PC-9 (cell line): ENCODE measurements at regions of chr12 and their contacts with region 1.

Region 1: GRCh38 chr12:104243551-104243950 is 28.0 kb downstream of the TXNRD1 start:
- DNase-seq: no peak
- H3K4me3 ChIP-seq: no peak overlapping the region
- H3K27ac ChIP-seq: no peak overlapping the region
- H3K4me1 ChIP-seq: no peaks in the 10 kb centered on the region
- H3K27me3 ChIP-seq: no peaks in the 10 kb centered on the region
- CTCF ChIP-seq: no peak

Region 2: DNA sequence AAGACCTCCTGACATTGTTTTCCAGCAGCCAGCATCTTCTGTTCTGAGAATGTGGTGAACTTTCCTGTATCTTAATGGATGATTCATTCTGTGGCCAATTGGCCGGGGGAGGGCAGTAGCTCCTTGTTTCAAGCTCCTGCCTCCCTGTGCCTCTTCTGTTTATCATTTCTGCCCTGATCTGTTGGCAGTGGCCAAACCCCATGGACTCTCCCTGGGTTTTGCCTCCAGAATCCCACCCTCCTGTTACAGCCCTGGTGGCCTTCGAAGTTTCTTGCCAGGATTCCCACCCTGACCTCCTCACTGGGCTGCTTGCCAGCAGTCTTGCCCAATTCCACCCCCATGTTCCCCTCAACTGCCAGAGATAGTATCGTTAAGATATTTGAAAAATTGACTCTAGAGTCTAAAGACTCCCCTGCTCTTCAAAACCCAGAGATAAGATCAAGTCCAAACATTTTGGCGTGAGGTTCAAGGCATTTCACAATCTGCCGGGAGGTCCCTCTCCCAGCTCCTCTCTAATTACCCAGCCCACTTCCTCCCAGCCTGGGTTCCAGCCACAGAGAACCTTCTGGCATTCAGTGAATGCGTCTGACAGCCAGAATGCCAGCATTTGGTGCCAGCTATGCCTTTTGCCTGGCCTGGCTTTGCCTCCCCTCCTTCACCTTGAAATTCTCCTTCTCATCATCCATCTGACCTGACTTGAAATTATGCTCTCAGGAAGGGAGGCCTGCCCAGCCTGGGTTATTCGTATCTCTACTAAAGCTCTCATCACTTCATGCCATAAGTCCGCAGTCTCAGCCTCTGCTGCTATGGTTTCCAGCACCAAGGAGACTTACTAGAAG is 65.7 kb before region 1 on chr12:
- CTCF ChIA-PET with region 1: no interaction called
- POLR2A ChIA-PET with region 1: no interaction called
- intact Hi-C with region 1: no loop called
- DNase-seq: peak; percentile 73 to 88
- H3K4me3 ChIP-seq: peak overlapping the region; percentile 18; the same call in 1 of the 2 replicates
- H3K27ac ChIP-seq: peak overlapping the region; percentile 56
- H3K4me1 ChIP-seq: peaks cover 38% of the 10 kb centered on the region
- H3K27me3 ChIP-seq: no peaks in the 10 kb centered on the region
- CTCF ChIP-seq: peak; percentile 60; the same call in 1 of the 2 replicates

Region 3: DNA sequence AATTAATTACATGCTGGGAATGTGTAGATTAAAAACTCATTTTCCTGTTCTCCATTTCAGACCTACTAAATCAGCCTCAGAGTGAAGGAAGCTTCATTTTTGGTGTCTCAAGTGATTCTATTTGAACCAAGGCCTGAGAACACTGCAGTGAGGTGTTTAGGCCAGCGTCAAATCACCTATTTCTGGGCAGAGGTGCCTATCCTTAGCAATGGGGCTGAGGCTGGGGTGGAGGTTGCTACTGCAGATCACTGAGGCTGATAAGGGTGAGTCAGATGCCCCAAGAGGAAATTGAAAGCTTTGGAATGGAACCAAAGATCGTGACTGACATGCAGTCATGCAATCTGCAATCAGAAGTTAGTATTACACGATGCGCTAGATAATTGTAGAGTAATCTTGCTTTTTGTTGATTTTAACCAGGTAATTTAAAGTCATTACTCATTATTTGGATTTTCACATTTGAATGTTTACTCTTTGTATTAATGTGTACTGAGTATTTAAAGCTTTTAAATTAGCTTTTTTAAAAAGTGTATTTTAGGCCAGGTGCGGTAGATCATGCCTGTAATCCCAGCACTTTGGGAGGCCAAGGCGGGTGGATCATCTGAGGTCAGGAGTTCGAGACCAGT is 23.5 kb before region 1 on chr12:
- CTCF ChIA-PET with region 1: no interaction called
- POLR2A ChIA-PET with region 1: no interaction called
- intact Hi-C with region 1: no loop called
- DNase-seq: peak; percentile 84 to 98
- H3K4me3 ChIP-seq: peak overlapping the region; percentile 38; the same call in 1 of the 2 replicates
- H3K27ac ChIP-seq: peak overlapping the region; percentile 99
- H3K4me1 ChIP-seq: peaks cover 77% of the 10 kb centered on the region
- H3K27me3 ChIP-seq: no peaks in the 10 kb centered on the region
- CTCF ChIP-seq: no peak

Region 4: DNA sequence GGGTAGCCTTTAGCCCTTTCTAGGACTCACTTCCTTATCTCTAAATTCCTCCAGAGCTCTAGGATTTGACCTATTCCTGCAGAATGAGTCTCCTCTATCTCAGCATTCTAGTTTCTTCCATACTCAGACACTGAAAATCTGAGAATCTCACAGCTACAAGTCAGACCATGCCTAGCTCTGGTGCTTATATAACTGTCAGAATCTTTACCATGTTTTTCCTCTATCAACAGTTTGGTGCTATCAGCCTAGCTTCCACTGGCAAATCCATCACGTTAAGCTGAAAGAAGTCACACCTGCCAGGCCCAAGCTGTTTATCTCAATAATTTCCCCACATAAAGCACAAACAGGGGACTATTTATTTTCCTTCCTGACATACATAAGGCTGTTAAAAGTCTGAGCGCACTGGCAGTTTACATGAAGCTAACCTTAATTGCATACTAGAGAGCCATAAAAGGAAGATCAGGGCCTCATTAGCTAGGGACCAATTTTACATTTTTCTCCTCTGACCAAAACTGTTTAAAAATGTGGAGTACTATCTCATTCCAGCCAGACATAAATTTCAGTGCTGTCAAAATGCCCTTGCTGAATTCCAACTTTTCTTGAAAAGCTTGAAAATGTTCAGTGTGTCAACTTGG is 1357.5 kb after region 1 on chr12:
- CTCF ChIA-PET with region 1: interaction called, 13 read pairs
- POLR2A ChIA-PET with region 1: no interaction called
- intact Hi-C with region 1: no loop called
- DNase-seq: no peak
- H3K4me3 ChIP-seq: no peak overlapping the region
- H3K27ac ChIP-seq: no peak overlapping the region
- H3K4me1 ChIP-seq: no peaks in the 10 kb centered on the region
- H3K27me3 ChIP-seq: no peaks in the 10 kb centered on the region
- CTCF ChIP-seq: no peak